CD8-positive, alpha-beta T cell (primary cell): ENCODE measurements at regions of chr10 and their contacts with region 1.

Region 1: GRCh38 chr10:70461215-70461986 is 17.2 kb upstream of the PALD1 start:
- DNase-seq: peak in 8 of 9 experiments; percentile 30 to 67 (median 47)
- ATAC-seq: peak; percentile 70
- H3K4me3 ChIP-seq: no peak overlapping the region
- H3K4me3 Mint-ChIP-seq: no peak overlapping the region
- H3K27ac ChIP-seq: no peak overlapping the region
- H3K27ac Mint-ChIP-seq: no peak overlapping the region
- H3K4me1 ChIP-seq: peaks cover 11% of the 10 kb centered on the region
- H3K4me1 Mint-ChIP-seq: peaks cover 4% of the 10 kb centered on the region
- H3K27me3 ChIP-seq: peaks cover 3 to 15% of the 10 kb centered on the region in 2 experiments
- H3K27me3 Mint-ChIP-seq: peaks cover 37% of the 10 kb centered on the region
- CTCF ChIP-seq: peak; percentile 76

Region 2: GRCh38 chr10:70296406-70296899 is 164.9 kb before region 1 on chr10:
- CTCF ChIA-PET with region 1: no interaction called
- POLR2A ChIA-PET with region 1: no interaction called
- intact Hi-C with region 1: no loop called
- DNase-seq: peak in 1 of 9 experiments; percentile 20
- ATAC-seq: no peak
- H3K4me3 ChIP-seq: no peak overlapping the region
- H3K4me3 Mint-ChIP-seq: no peak overlapping the region
- H3K27ac ChIP-seq: no peak overlapping the region
- H3K27ac Mint-ChIP-seq: no peak overlapping the region
- H3K4me1 ChIP-seq: no peaks in the 10 kb centered on the region
- H3K4me1 Mint-ChIP-seq: peaks cover 4% of the 10 kb centered on the region
- H3K27me3 ChIP-seq: no peaks in the 10 kb centered on the region
- H3K27me3 Mint-ChIP-seq: no peaks in the 10 kb centered on the region
- CTCF ChIP-seq: no peak

Region 3: GRCh38 chr10:70540089-70540788 is 78.8 kb after region 1 on chr10:
- CTCF ChIA-PET with region 1: interaction called, 26 read pairs
- POLR2A ChIA-PET with region 1: no interaction called
- intact Hi-C with region 1: loop called (anchors 1 kb)
- DNase-seq: peak in 3 of 9 experiments; percentile 18 to 44 (median 37)
- ATAC-seq: peak; percentile 38
- H3K4me3 ChIP-seq: no peak overlapping the region
- H3K4me3 Mint-ChIP-seq: no peak overlapping the region
- H3K27ac ChIP-seq: no peak overlapping the region
- H3K27ac Mint-ChIP-seq: no peak overlapping the region
- H3K4me1 ChIP-seq: no peaks in the 10 kb centered on the region
- H3K4me1 Mint-ChIP-seq: no peaks in the 10 kb centered on the region
- H3K27me3 ChIP-seq: no peaks in the 10 kb centered on the region
- H3K27me3 Mint-ChIP-seq: no peaks in the 10 kb centered on the region
- CTCF ChIP-seq: peak; percentile 16

Region 4: DNA sequence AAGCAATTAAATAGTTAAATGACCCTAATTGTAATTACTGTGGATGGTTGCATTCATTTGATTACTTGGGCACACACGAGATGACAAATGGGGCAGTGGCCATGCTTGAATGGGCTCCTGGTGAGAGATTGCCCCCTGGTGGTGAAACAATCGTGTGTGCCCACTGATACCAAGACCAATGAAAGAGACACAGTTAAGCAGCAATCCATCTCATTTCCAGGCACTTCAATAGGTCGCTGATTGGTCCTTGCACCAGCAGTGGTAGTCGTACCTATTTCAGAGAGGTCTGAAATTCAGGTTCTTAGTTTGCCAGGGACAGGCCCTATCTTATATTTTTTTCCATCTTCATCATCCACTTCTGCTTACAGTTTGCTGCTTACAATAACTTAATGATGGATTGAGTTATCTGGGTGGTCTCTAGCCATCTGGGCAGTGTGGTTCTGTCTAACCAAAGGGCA is 418.7 kb after region 1 on chr10:
- CTCF ChIA-PET with region 1: interaction called, 4 read pairs
- POLR2A ChIA-PET with region 1: no interaction called
- intact Hi-C with region 1: loop called in 1 of 2 experiments (anchors 1 kb)
- DNase-seq: peak; percentile 45 to 87 (median 76)
- ATAC-seq: peak; percentile 92
- H3K4me3 ChIP-seq: no peak overlapping the region
- H3K4me3 Mint-ChIP-seq: no peak overlapping the region
- H3K27ac ChIP-seq: no peak overlapping the region
- H3K27ac Mint-ChIP-seq: no peak overlapping the region
- H3K4me1 ChIP-seq: no peaks in the 10 kb centered on the region
- H3K4me1 Mint-ChIP-seq: peaks cover 2% of the 10 kb centered on the region
- H3K27me3 ChIP-seq: no peaks in the 10 kb centered on the region
- H3K27me3 Mint-ChIP-seq: no peaks in the 10 kb centered on the region
- CTCF ChIP-seq: peak; percentile 84